A549 (cell line): ENCODE measurements at regions of chr6 and their contacts with region 1.

Region 1: GRCh38 chr6:2952557-2953095 is 18.7 kb downstream of the SERPINB6 start:
- DNase-seq: peak; percentile 58 to 93
- ATAC-seq: peak; percentile 97 to 99
- H3K4me3 ChIP-seq: no peak overlapping the region
- H3K27ac ChIP-seq: peak overlapping the region; percentile 1 to 73; a peak in 4 of 6 replicates
- H3K4me1 ChIP-seq: peaks cover 13% of the 10 kb centered on the region
- CTCF ChIP-seq: peak; percentile 92
- EP300 ChIP-seq: no peak
- POLR2A ChIP-seq: no peak
- RAD21 ChIP-seq: peak; percentile 53 to 69

Region 2: GRCh38 chr6:2688416-2689064 is 264.1 kb before region 1 on chr6:
- CTCF ChIA-PET with region 1: no interaction called
- POLR2A ChIA-PET with region 1: no interaction called
- DNase-seq: peak; percentile 19 to 21
- ATAC-seq: no peak
- H3K4me3 ChIP-seq: no peak overlapping the region
- H3K27ac ChIP-seq: no peak overlapping the region
- H3K4me1 ChIP-seq: peaks cover 7% of the 10 kb centered on the region; the same call in 1 of the 3 replicates
- CTCF ChIP-seq: no peak
- EP300 ChIP-seq: no peak
- POLR2A ChIP-seq: no peak
- RAD21 ChIP-seq: no peak

Region 3: GRCh38 chr6:2773450-2773849 is 179.2 kb before region 1 on chr6:
- CTCF ChIA-PET with region 1: interaction called, 12 read pairs
- POLR2A ChIA-PET with region 1: no interaction called
- DNase-seq: no peak
- ATAC-seq: no peak
- H3K4me3 ChIP-seq: no peak overlapping the region
- H3K27ac ChIP-seq: no peak overlapping the region
- H3K4me1 ChIP-seq: peaks cover 16% of the 10 kb centered on the region; the same call in 2 of the 3 replicates
- CTCF ChIP-seq: no peak
- EP300 ChIP-seq: no peak
- POLR2A ChIP-seq: no peak
- RAD21 ChIP-seq: no peak

Region 4: DNA sequence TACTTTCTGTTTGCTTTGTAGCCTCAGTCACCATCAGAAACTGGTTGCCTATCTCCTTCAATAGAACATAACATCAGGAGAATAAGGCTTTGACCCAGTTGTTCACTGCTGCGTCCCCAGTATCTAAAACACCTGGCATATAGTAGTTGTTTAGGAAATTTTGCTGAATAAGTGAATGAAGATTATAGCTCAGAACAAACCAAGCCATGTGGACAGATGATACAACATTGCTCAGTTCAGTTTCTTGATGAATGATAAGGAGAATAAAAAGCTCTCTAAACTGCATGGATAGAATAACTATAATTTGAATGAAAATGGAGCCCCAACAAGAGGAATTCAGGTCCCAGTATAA is 105.8 kb before region 1 on chr6:
- CTCF ChIA-PET with region 1: interaction called, 13 read pairs
- POLR2A ChIA-PET with region 1: no interaction called
- DNase-seq: no peak
- ATAC-seq: 0 out of 6 replicates have a peak, but pooled peaks of 1 of the 2 experiments have one; percentile 21
- H3K4me3 ChIP-seq: peak overlapping the region; percentile 13; the same call in 1 of the 3 replicates
- H3K27ac ChIP-seq: peak overlapping the region; percentile 81 to 94
- H3K4me1 ChIP-seq: peaks cover 39% of the 10 kb centered on the region
- CTCF ChIP-seq: no peak
- EP300 ChIP-seq: no peak
- POLR2A ChIP-seq: no peak
- RAD21 ChIP-seq: no peak

Region 5: DNA sequence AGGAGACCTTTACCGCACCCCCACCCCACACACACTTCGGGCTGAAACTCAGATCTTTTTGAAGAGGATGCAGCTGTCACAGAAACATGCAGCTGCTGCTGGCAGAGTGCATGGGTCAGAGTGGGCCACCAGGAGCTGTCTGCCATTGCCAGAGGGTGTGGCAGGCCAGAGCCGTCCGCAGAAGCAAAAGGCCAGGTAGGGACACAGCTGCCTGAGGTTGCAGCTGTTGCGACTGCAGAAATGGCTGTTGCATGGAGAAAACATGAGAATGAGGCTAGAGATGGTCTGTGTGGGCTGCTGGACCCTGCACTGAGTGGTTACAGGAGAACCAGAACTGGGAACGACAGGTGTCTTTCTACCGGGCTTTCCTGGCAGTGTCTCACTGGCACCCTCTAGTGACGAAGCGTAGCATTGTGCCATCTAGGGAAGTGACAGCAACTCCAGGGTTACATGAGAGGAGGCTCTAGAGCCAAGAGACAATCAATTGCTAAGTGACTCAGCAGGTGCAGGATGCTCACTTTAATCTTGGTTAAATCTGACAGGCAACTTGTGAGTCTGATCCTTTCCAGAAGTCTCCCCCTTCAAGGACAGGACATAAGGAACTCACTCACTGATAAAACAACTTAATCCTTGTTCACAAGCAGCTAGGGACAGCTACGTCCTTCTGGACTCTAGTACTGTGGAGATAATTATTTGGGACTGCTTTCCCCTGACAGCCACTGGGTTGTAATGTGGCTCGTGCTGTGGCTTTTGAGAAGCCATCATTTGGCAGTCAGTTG is 20.5 kb before region 1 on chr6:
- CTCF ChIA-PET with region 1: interaction called, 183 read pairs
- POLR2A ChIA-PET with region 1: no interaction called
- DNase-seq: peak; percentile 78 to 83
- ATAC-seq: peak; percentile 99
- H3K4me3 ChIP-seq: no peak overlapping the region
- H3K27ac ChIP-seq: peak overlapping the region; percentile 25 to 38; a peak in 3 of 6 replicates
- H3K4me1 ChIP-seq: peaks cover 7% of the 10 kb centered on the region; the same call in 2 of the 3 replicates
- CTCF ChIP-seq: peak; percentile 89
- EP300 ChIP-seq: no peak
- POLR2A ChIP-seq: no peak
- RAD21 ChIP-seq: peak; percentile 85 to 88

Region 6: GRCh38 chr6:2966347-2966746 is 13.7 kb after region 1 on chr6:
- CTCF ChIA-PET with region 1: interaction called, 19 read pairs
- POLR2A ChIA-PET with region 1: interaction called, 7 read pairs
- DNase-seq: no peak
- ATAC-seq: no peak
- H3K4me3 ChIP-seq: no peak overlapping the region
- H3K27ac ChIP-seq: no peak overlapping the region
- H3K4me1 ChIP-seq: peaks cover 23% of the 10 kb centered on the region
- CTCF ChIP-seq: no peak
- EP300 ChIP-seq: no peak
- POLR2A ChIP-seq: no peak
- RAD21 ChIP-seq: no peak

Region 7: DNA sequence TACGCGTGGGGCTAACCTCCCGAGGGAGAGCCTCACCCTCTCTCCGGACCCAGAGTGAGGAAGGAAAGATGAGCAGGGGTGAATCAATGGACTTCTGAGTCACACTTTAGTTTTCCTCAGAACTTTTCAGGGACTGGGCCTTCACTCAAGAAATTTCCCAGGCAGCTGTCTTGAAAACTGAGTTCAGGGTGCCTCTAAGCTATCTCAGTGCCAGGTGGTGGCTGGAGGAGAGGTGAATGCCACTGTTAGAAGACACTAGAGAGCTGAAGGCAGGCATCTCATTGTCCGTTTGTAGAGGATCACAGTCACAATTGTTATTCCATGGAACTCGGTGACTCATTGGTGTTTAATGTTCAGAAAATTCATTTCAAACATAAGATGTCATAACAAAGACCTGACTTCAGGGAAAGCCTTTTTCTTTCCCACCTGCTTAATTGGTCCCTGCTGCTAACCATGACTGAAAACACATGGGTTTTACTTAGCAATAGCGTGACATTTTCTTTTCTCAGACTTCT is 24.0 kb after region 1 on chr6:
- CTCF ChIA-PET with region 1: interaction called, 22 read pairs
- POLR2A ChIA-PET with region 1: interaction called, 7 read pairs
- DNase-seq: peak in 1 of 2 experiments; percentile 34
- ATAC-seq: peak; percentile 56 to 60; a peak in 5 of 6 replicates
- H3K4me3 ChIP-seq: no peak overlapping the region
- H3K27ac ChIP-seq: peak overlapping the region; percentile 73 to 86
- H3K4me1 ChIP-seq: peaks cover 56% of the 10 kb centered on the region
- CTCF ChIP-seq: no peak
- EP300 ChIP-seq: no peak
- POLR2A ChIP-seq: no peak
- RAD21 ChIP-seq: no peak

Region 8: DNA sequence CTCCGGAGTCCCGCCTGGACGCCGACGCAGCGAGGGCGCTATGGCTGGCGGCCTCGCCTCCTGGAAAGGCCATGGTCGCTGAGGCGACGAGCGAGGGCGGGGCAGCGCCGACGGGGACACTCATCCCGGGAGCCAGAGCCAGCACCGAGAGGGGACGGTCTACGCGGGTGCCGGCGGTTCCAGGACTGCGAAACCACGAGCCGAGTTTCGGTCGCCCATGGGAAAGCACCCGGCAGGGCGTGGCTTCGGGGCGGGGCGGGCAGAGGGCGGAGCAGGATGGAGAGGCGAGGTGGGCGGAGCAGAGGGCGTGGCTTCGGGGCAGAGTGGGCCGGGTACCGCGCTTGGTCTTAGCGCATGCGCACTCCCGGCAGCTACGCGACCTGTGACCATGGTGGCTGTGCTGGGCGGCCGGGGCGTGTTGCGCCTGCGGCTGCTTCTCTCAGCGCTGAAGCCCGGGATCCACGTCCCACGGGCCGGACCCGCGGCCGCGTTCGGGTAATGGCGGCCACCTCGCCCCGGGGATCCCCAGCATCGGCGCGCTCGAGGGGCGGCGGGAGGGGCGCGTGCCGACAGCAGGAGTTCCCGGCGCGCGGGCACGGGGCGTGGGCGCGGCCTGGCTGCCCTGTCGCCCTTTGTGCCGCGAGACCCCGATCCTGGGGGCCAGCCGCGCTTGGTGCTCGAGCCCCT is 165.9 kb after region 1 on chr6 and contains the start of gene BPHL:
- CTCF ChIA-PET with region 1: no interaction called
- POLR2A ChIA-PET with region 1: no interaction called
- DNase-seq: peak; percentile 88 to 91
- ATAC-seq: peak; percentile 91 to 96
- H3K4me3 ChIP-seq: peak within 1 kb of the TSS; percentile 71
- H3K27ac ChIP-seq: peak within 1 kb of the TSS; percentile 95 to 96
- H3K4me1 ChIP-seq: peaks cover 9% of the 10 kb centered on the region; the same call in 2 of the 3 replicates
- CTCF ChIP-seq: no peak
- EP300 ChIP-seq: no peak
- POLR2A ChIP-seq: peak; percentile 81
- RAD21 ChIP-seq: no peak
- polyA plus RNA-seq, gene BPHL: 25.4 and 25.5 TPM in 2 replicates

Region 9: GRCh38 chr6:3341467-3341866 is 388.8 kb after region 1 on chr6:
- CTCF ChIA-PET with region 1: no interaction called
- POLR2A ChIA-PET with region 1: no interaction called
- DNase-seq: no peak
- ATAC-seq: no peak
- H3K4me3 ChIP-seq: no peak overlapping the region
- H3K27ac ChIP-seq: no peak overlapping the region
- H3K4me1 ChIP-seq: peaks cover 21% of the 10 kb centered on the region
- CTCF ChIP-seq: no peak
- EP300 ChIP-seq: no peak
- POLR2A ChIP-seq: no peak
- RAD21 ChIP-seq: no peak